MCF 10A (cell line): ENCODE measurements at regions of chr2 and their contacts with region 1.

Region 1: GRCh38 chr2:20015472-20016083 is 3.1 kb upstream of the MATN3 start:
- DNase-seq: peak; percentile 68
- H3K4me3 Mint-ChIP-seq: no peak overlapping the region
- H3K27ac Mint-ChIP-seq: no peak overlapping the region
- H3K4me1 Mint-ChIP-seq: no peaks in the 10 kb centered on the region
- H3K27me3 Mint-ChIP-seq: no peaks in the 10 kb centered on the region
- CTCF ChIP-seq: peak; percentile 43

Region 2: GRCh38 chr2:19461504-19462255 is 553.9 kb before region 1 on chr2:
- CTCF ChIA-PET with region 1: no interaction called
- POLR2A ChIA-PET with region 1: no interaction called
- intact Hi-C with region 1: no loop called
- DNase-seq: no peak
- H3K4me3 Mint-ChIP-seq: no peak overlapping the region
- H3K27ac Mint-ChIP-seq: no peak overlapping the region
- H3K4me1 Mint-ChIP-seq: no peaks in the 10 kb centered on the region
- H3K27me3 Mint-ChIP-seq: no peaks in the 10 kb centered on the region
- CTCF ChIP-seq: no peak

Region 3: GRCh38 chr2:19819097-19820065 is 196.2 kb before region 1 on chr2:
- CTCF ChIA-PET with region 1: no interaction called
- POLR2A ChIA-PET with region 1: no interaction called
- intact Hi-C with region 1: no loop called
- DNase-seq: peak; percentile 93
- H3K4me3 Mint-ChIP-seq: no peak overlapping the region
- H3K27ac Mint-ChIP-seq: no peak overlapping the region
- H3K4me1 Mint-ChIP-seq: no peaks in the 10 kb centered on the region
- H3K27me3 Mint-ChIP-seq: no peaks in the 10 kb centered on the region
- CTCF ChIP-seq: no peak

Region 4: DNA sequence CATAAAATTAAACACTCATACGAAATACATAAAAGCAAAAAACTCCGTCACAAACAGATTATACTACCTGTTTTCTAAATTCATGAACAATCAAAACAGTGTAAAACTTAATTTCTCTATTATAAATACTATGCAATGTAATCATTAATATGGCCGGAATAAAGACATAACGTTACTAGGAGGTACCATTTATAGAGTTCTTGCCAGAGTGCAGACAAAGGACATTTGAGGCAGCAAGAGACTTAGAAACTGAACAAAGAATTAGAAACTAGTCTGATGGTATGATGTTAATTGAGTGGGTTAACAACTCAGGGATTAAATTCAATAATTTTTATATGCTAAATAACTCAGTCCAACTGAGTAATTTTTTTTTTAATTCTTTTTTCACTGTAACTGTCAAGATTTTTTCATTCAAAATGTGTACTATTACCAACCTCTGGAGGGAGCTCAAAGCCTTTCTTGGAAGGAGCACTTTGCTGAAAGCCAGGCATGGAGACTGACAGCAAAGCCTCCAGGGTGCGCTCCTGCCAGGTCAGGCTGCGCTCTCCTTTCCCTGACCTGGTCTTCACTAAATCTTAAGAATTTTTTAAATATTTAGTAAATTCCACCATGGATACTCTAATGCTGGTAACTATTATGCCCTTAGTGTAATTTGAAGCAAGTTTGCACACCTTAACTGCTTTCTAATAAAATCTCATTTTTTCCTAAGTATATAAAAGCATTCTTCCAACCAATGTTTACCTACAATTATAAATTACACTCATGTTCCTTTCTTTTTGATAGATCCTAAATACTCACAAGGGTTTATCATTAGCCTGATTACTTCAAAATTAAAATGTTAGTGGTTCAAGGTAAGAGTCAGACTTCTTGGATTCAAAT is 59.8 kb before region 1 on chr2:
- CTCF ChIA-PET with region 1: interaction called, 7 read pairs
- POLR2A ChIA-PET with region 1: interaction called, 4 read pairs
- intact Hi-C with region 1: loop called (anchors 1 kb)
- DNase-seq: peak; percentile 72
- H3K4me3 Mint-ChIP-seq: no peak overlapping the region
- H3K27ac Mint-ChIP-seq: no peak overlapping the region
- H3K4me1 Mint-ChIP-seq: no peaks in the 10 kb centered on the region
- H3K27me3 Mint-ChIP-seq: no peaks in the 10 kb centered on the region
- CTCF ChIP-seq: peak; percentile 82

Region 5: DNA sequence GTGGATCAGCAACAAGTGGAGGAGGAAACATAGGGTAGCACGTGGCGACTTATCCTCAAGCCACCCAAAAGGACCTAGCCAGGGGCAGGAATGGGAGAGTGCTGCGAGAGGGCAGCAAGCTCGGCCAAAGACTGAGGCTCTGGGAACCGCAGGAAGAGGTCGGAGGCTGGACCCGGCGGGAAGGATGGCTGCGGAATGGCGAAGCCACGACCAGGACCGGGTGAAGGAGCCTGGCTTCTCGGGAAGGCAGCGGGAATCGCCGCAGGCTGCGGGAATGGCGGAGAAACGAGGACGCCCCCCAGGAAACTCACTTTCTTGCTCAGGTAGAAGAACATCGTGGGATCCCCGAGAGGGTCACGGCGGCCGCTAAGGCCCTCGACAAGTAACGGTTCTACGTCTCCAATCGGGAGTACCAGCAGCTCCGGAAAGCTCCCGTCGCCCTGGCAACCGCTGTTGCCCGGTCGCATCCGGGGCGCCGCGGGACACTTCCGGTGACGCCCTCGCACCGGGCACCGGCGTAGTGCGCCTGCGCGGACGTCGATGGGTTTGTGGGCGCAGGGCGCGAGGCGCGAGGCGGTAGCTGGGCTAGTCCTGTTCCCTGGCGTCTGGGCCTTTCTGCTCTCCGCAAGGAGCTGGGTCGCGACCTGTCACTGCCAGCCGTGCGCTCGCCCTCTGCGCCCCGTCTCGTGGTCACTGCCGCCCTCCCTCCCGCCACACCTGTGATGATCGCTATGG is 25.7 kb before region 1 on chr2 and contains the start of gene WDR35:
- CTCF ChIA-PET with region 1: interaction called, 10 read pairs
- POLR2A ChIA-PET with region 1: interaction called, 8 read pairs
- intact Hi-C with region 1: loop called (anchors 1 kb)
- DNase-seq: peak; percentile 90
- H3K4me3 Mint-ChIP-seq: peak within 1 kb of the TSS; percentile 95
- H3K27ac Mint-ChIP-seq: peak within 1 kb of the TSS; percentile 77
- H3K4me1 Mint-ChIP-seq: peaks cover 26% of the 10 kb centered on the region
- H3K27me3 Mint-ChIP-seq: no peaks in the 10 kb centered on the region
- CTCF ChIP-seq: no peak
- total RNA-seq, gene WDR35: 13.2 and 17.5 TPM in 2 replicates

Region 6: GRCh38 chr2:20027705-20028434 is 12.3 kb after region 1 on chr2:
- CTCF ChIA-PET with region 1: interaction called, 55 read pairs
- POLR2A ChIA-PET with region 1: no interaction called
- intact Hi-C with region 1: no loop called
- DNase-seq: no peak
- H3K4me3 Mint-ChIP-seq: no peak overlapping the region
- H3K27ac Mint-ChIP-seq: peak overlapping the region; percentile 39
- H3K4me1 Mint-ChIP-seq: peaks cover 8% of the 10 kb centered on the region
- H3K27me3 Mint-ChIP-seq: no peaks in the 10 kb centered on the region
- CTCF ChIP-seq: no peak

Region 7: GRCh38 chr2:20071397-20072383 is 56.1 kb after region 1 on chr2:
- CTCF ChIA-PET with region 1: interaction called, 15 read pairs
- POLR2A ChIA-PET with region 1: interaction called, 10 read pairs
- intact Hi-C with region 1: no loop called
- DNase-seq: peak; percentile 87
- H3K4me3 Mint-ChIP-seq: peak overlapping the region; percentile 59
- H3K27ac Mint-ChIP-seq: peak overlapping the region; percentile 87
- H3K4me1 Mint-ChIP-seq: peaks cover 44% of the 10 kb centered on the region
- H3K27me3 Mint-ChIP-seq: no peaks in the 10 kb centered on the region
- CTCF ChIP-seq: no peak

Region 8: GRCh38 chr2:20097879-20098714 is 82.5 kb after region 1 on chr2:
- CTCF ChIA-PET with region 1: interaction called, 205 read pairs
- POLR2A ChIA-PET with region 1: interaction called, 23 read pairs
- intact Hi-C with region 1: loop called (anchors 1 kb)
- DNase-seq: peak; percentile 85
- H3K4me3 Mint-ChIP-seq: no peak overlapping the region
- H3K27ac Mint-ChIP-seq: no peak overlapping the region
- H3K4me1 Mint-ChIP-seq: peaks cover 21% of the 10 kb centered on the region
- H3K27me3 Mint-ChIP-seq: no peaks in the 10 kb centered on the region
- CTCF ChIP-seq: peak; percentile 92